ENCODE measurements at regions of chr11 and their contacts with region 1.

Region 1: GRCh38 chr11:46570790-46571398 is 22.9 kb downstream of the AMBRA1 start:
- DNase-seq: no peak
- H3K4me3 Mint-ChIP-seq: no peak overlapping the region
- H3K27ac Mint-ChIP-seq: no peak overlapping the region
- H3K4me1 Mint-ChIP-seq: peaks cover 21% of the 10 kb centered on the region
- H3K27me3 Mint-ChIP-seq: no peaks in the 10 kb centered on the region

Region 2: DNA sequence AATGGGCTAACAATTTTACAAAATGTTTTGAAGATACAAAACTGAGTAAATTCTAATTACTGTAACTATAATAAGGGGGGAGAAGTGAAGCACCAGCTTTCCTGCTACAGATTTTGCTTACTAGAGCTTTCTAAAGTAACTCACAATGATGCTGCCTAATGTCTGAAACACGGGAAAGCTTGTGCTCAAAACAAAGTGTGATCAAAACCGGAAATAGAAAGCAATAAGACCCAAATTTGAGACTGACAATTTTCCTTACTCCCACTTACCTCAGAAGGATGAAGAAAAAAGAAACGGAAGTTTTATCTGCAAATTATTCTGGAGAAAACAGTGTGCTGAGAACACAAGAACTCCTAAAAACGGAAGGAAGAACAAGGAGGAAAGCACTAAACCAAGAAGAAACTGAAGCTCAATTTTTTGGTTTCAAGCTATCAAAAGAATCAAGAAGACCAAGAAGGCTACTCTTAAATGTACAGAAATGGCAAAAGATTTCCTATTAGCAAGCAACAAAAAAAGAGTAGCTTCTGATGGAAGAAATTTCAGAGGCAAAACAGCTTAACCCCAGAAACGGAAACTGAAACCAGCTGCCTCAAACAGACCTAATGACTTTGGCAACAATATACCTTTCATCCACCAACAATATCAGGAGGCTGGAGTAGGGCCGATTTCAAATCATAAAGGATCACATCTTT is 10.4 kb before region 1 on chr11:
- CTCF ChIA-PET with region 1: interaction called, 5 read pairs
- POLR2A ChIA-PET with region 1: interaction called, 19 read pairs
- DNase-seq: peak; percentile 27
- H3K4me3 Mint-ChIP-seq: peak overlapping the region; percentile 95
- H3K27ac Mint-ChIP-seq: peak overlapping the region; percentile 96
- H3K4me1 Mint-ChIP-seq: peaks cover 56% of the 10 kb centered on the region
- H3K27me3 Mint-ChIP-seq: no peaks in the 10 kb centered on the region

Region 3: DNA sequence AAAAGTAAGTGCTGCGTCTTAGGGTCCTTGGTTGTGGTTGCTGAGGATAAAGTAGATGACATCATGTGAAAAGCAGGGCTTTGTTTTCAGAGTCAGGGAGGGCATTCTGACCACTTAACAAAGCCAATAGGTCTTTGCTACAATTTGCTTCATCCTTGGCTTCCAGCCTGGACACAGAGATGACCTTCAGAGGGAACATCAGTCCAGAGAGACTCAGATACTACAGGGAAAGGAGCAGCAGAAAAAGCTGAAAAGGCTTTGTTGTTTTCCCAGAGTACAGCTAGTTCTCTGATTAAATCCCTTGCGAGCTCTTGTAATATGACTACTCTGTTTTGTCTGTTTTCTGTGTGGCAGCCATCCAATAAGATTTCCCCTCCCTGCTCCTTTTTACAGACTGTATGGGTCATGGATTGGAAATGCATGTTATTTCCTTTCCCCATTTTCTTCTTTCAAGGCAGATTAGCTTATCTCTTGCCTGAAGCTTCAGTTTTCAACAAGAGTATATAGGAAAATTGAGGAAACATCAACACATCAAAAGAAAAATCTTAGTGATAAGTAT is 78.4 kb after region 1 on chr11:
- CTCF ChIA-PET with region 1: no interaction called
- POLR2A ChIA-PET with region 1: no interaction called
- DNase-seq: no peak
- H3K4me3 Mint-ChIP-seq: no peak overlapping the region
- H3K27ac Mint-ChIP-seq: no peak overlapping the region
- H3K4me1 Mint-ChIP-seq: no peaks in the 10 kb centered on the region
- H3K27me3 Mint-ChIP-seq: no peaks in the 10 kb centered on the region

Region 4: GRCh38 chr11:46918083-46918787 is 347.3 kb after region 1 on chr11 and contains the start of gene LRP4:
- CTCF ChIA-PET with region 1: no interaction called
- POLR2A ChIA-PET with region 1: no interaction called
- DNase-seq: peak; percentile 35
- H3K4me3 Mint-ChIP-seq: peak within 1 kb of the TSS; percentile 56
- H3K27ac Mint-ChIP-seq: no peak within 1 kb of the TSS
- H3K4me1 Mint-ChIP-seq: peaks cover 29% of the 10 kb centered on the region
- H3K27me3 Mint-ChIP-seq: peaks cover 58% of the 10 kb centered on the region
- total RNA-seq, gene LRP4: 0.05 TPM in 1 of 2 experiments, not detected in the other